ENCODE measurements at regions of chr7 and their contacts with region 1.

Region 1: GRCh38 chr7:101784292-101785127 is 32.9 kb upstream of the CUX1 start:
- DNase-seq: no peak
- ATAC-seq: no peak
- H3K4me3 ChIP-seq: no peak overlapping the region
- H3K27ac ChIP-seq: no peak overlapping the region
- H3K4me1 ChIP-seq: no peaks in the 10 kb centered on the region
- H3K27me3 ChIP-seq: no peaks in the 10 kb centered on the region

Region 2: GRCh38 chr7:101564778-101565211 is 219.7 kb before region 1 on chr7:
- intact Hi-C with region 1: loop called in 1 of 2 experiments (anchors 10 kb)
- DNase-seq: no peak
- ATAC-seq: no peak
- H3K4me3 ChIP-seq: no peak overlapping the region
- H3K27ac ChIP-seq: no peak overlapping the region
- H3K4me1 ChIP-seq: no peaks in the 10 kb centered on the region
- H3K27me3 ChIP-seq: peaks cover 0 to 2% of the 10 kb centered on the region in 2 donors

Region 3: GRCh38 chr7:101729241-101729993 is 55.1 kb before region 1 on chr7:
- intact Hi-C with region 1: loop called in 1 of 2 experiments (anchors 10 kb)
- DNase-seq: no peak
- ATAC-seq: no peak
- H3K4me3 ChIP-seq: no peak overlapping the region
- H3K27ac ChIP-seq: no peak overlapping the region
- H3K4me1 ChIP-seq: no peaks in the 10 kb centered on the region
- H3K27me3 ChIP-seq: no peaks in the 10 kb centered on the region